ENCODE measurements at regions of chrX and their contacts with region 1.

Region 1: DNA sequence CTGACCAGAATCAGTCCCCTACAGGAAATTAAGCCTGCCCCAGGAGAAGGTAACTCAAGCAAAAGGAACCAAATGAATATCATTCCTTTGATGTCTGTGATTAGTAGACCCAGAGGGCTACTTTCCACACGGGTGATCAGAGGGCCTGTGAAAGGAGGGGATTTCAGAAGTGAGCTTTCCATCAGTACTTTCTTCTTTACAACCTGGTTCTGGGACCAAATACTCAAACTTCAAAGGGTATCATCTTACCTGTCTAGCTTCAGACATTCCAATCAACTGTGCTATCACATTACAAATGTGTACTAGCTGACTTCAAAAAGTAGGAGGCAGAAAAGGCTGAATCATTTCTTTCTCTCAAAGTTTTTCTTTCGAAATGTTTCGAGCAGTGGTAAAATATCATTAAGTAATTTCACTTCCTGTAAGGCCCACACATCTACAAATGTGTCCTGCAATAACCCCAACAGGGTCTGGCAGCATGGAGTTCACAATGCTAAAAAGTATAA is 23.9 kb downstream of the ACSL4 start:
- DNase-seq: no peak
- ATAC-seq: no peak
- H3K4me3 ChIP-seq: no peak overlapping the region
- H3K27ac ChIP-seq: no peak overlapping the region
- H3K4me1 ChIP-seq: peaks cover 3% of the 10 kb centered on the region; the same call in 1 of the 2 replicates
- H3K27me3 ChIP-seq: no peaks in the 10 kb centered on the region
- CTCF ChIP-seq: no peak

Region 2: DNA sequence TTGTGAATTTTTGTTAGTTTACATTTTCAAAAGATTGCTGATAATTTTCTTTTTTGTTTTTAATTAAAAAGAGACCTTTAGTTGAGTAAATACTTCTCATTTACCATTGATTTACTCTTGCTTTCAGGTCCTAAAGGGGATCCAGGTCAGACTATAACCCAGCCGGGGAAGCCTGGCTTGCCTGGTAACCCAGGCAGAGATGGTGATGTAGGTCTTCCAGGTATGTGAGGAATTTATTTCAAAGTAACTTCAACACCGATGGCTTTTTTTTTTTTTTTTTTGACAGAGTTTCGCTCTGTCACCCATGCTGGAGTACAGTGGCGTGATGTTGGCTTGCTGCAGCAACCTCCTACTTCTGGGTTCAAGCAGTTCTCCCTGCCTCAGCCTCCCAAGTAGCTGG is 1107.9 kb before region 1 on chrX:
- CTCF ChIA-PET with region 1: no interaction called
- POLR2A ChIA-PET with region 1: no interaction called
- in situ Hi-C with region 1: no loop called
- intact Hi-C with region 1: no loop called
- DNase-seq: no peak
- ATAC-seq: no peak
- H3K4me3 ChIP-seq: no peak overlapping the region
- H3K27ac ChIP-seq: no peak overlapping the region
- H3K4me1 ChIP-seq: no peaks in the 10 kb centered on the region
- H3K27me3 ChIP-seq: no peaks in the 10 kb centered on the region
- CTCF ChIP-seq: no peak

Region 3: DNA sequence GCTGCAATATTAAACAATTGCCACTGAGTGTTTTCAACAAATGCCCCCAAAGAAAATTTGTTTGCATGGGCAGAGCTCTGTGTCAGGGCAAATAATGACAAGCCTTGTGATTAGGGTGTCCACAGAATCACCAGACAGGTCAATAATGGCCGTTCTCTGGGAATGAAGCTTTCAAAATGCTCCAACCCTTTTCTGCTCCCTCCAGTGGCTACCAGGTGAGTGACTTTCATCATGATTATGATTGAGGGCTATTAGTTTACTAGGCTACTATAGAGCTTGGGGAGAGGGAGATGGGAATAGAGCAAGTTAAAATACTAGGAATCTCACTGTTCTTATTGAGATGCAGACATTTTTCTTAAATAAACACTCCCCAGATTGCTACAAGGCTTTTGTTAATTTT is 996.3 kb before region 1 on chrX:
- CTCF ChIA-PET with region 1: interaction called, 12 read pairs
- POLR2A ChIA-PET with region 1: no interaction called
- in situ Hi-C with region 1: no loop called
- intact Hi-C with region 1: no loop called
- DNase-seq: no peak
- ATAC-seq: no peak
- H3K4me3 ChIP-seq: no peak overlapping the region
- H3K27ac ChIP-seq: no peak overlapping the region
- H3K4me1 ChIP-seq: no peaks in the 10 kb centered on the region
- H3K27me3 ChIP-seq: no peaks in the 10 kb centered on the region
- CTCF ChIP-seq: 0 out of 2 replicates have a peak, but pooled peaks have one; percentile 4

Region 4: GRCh38 chrX:109299091-109299490 is 410.1 kb before region 1 on chrX:
- CTCF ChIA-PET with region 1: no interaction called
- POLR2A ChIA-PET with region 1: no interaction called
- in situ Hi-C with region 1: no loop called
- intact Hi-C with region 1: no loop called
- DNase-seq: no peak
- ATAC-seq: no peak
- H3K4me3 ChIP-seq: no peak overlapping the region
- H3K27ac ChIP-seq: no peak overlapping the region
- H3K4me1 ChIP-seq: no peaks in the 10 kb centered on the region
- H3K27me3 ChIP-seq: no peaks in the 10 kb centered on the region
- CTCF ChIP-seq: no peak

Region 5: DNA sequence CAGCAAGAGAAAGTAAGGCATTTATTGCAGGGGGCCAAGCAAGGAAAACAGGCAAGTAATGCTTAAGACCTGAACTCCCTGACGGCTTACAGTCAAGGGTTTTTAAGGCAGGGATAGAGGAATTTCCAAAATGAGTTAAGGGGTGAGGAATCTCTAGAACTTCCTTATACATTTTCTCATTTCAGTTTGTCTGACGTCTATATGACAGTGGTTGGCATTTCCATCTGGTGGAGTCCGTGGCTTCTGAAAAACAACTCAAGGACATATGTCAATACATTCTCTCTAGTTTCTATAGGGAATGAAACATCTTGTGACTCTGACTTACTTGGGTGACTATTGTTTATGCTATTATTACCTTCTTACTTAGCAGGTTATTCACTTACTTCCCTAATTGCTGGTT is 208.0 kb before region 1 on chrX:
- CTCF ChIA-PET with region 1: no interaction called
- POLR2A ChIA-PET with region 1: no interaction called
- in situ Hi-C with region 1: no loop called
- intact Hi-C with region 1: no loop called
- DNase-seq: no peak
- ATAC-seq: no peak
- H3K4me3 ChIP-seq: no peak overlapping the region
- H3K27ac ChIP-seq: no peak overlapping the region
- H3K4me1 ChIP-seq: no peaks in the 10 kb centered on the region
- H3K27me3 ChIP-seq: no peaks in the 10 kb centered on the region
- CTCF ChIP-seq: no peak

Region 6: GRCh38 chrX:109856974-109857373 is 147.8 kb after region 1 on chrX:
- CTCF ChIA-PET with region 1: interaction called, 21 read pairs
- POLR2A ChIA-PET with region 1: no interaction called
- in situ Hi-C with region 1: no loop called
- intact Hi-C with region 1: loop called (anchors 1 kb)
- DNase-seq: no peak
- ATAC-seq: no peak
- H3K4me3 ChIP-seq: no peak overlapping the region
- H3K27ac ChIP-seq: no peak overlapping the region
- H3K4me1 ChIP-seq: no peaks in the 10 kb centered on the region
- H3K27me3 ChIP-seq: no peaks in the 10 kb centered on the region
- CTCF ChIP-seq: peak; percentile 84

Region 7: GRCh38 chrX:109890895-109891502 is 181.8 kb after region 1 on chrX:
- CTCF ChIA-PET with region 1: interaction called, 17 read pairs
- POLR2A ChIA-PET with region 1: no interaction called
- in situ Hi-C with region 1: no loop called
- intact Hi-C with region 1: loop called (anchors 1 kb)
- DNase-seq: peak; percentile 47
- ATAC-seq: peak; percentile 86
- H3K4me3 ChIP-seq: no peak overlapping the region
- H3K27ac ChIP-seq: no peak overlapping the region
- H3K4me1 ChIP-seq: no peaks in the 10 kb centered on the region
- H3K27me3 ChIP-seq: no peaks in the 10 kb centered on the region; the same call in 1 of the 2 replicates
- CTCF ChIP-seq: peak; percentile 88